ENCODE measurements at regions of chrX and their contacts with region 1.

Region 1: GRCh38 chrX:72620550-72621145 is 48.0 kb upstream of the HDAC8 start:
- DNase-seq: peak; percentile 90
- H3K4me3 ChIP-seq: peak overlapping the region in 1 of 3 experiments; percentile 33
- H3K27ac ChIP-seq: peak overlapping the region; percentile 88
- H3K4me1 ChIP-seq: peaks cover 31% of the 10 kb centered on the region
- H3K27me3 ChIP-seq: no peaks in the 10 kb centered on the region
- CTCF ChIP-seq: no peak
- POLR2A ChIP-seq: peak; percentile 39

Region 2: GRCh38 chrX:72572248-72573157 is 48.1 kb before region 1 on chrX and contains the start of gene HDAC8:
- CTCF ChIA-PET with region 1: no interaction called
- POLR2A ChIA-PET with region 1: no interaction called
- dilution Hi-C with region 1: no loop called
- intact Hi-C with region 1: loop called (anchors 5 kb)
- DNase-seq: peak; percentile 85
- H3K4me3 ChIP-seq: peak within 1 kb of the TSS; percentile 44 to 75 (median 61)
- H3K27ac ChIP-seq: peak within 1 kb of the TSS; percentile 73
- H3K4me1 ChIP-seq: peaks cover 12% of the 10 kb centered on the region
- H3K27me3 ChIP-seq: no peaks in the 10 kb centered on the region
- CTCF ChIP-seq: no peak
- POLR2A ChIP-seq: no peak
- total RNA-seq, gene HDAC8: 37.2 and 38.9 TPM in 2 replicates

Region 3: DNA sequence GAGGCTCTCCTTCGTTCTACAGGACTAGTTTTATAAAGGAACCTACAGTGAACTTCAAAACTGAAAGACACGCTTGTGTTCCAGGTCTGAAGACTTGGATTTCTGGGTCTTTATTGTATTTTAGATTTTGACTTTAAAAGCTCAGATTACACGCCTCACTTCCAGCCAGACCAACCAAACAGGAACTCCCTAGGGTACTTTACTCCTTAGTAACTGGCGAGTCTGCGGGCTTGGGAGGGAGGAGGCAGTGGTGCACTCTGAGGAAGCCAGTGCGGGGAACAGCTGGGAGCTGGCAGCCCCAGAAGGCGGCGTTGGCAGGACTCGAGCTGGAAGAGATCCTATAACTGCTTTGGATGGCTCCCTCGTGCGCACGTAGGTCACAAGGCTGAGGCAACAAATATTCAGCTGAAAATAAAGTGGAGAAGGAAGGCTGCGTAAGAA is 93.8 kb after region 1 on chrX:
- CTCF ChIA-PET with region 1: no interaction called
- POLR2A ChIA-PET with region 1: no interaction called
- dilution Hi-C with region 1: no loop called
- intact Hi-C with region 1: loop called (anchors 5 kb)
- DNase-seq: peak; percentile 68
- H3K4me3 ChIP-seq: peak overlapping the region; percentile 34 to 79 (median 44)
- H3K27ac ChIP-seq: peak overlapping the region; percentile 57
- H3K4me1 ChIP-seq: peaks cover 10% of the 10 kb centered on the region
- H3K27me3 ChIP-seq: no peaks in the 10 kb centered on the region
- CTCF ChIP-seq: peak in 1 of 2 donors; percentile 5
- POLR2A ChIP-seq: no peak